ENCODE measurements at regions of chr2 and their contacts with region 1.

Region 1: DNA sequence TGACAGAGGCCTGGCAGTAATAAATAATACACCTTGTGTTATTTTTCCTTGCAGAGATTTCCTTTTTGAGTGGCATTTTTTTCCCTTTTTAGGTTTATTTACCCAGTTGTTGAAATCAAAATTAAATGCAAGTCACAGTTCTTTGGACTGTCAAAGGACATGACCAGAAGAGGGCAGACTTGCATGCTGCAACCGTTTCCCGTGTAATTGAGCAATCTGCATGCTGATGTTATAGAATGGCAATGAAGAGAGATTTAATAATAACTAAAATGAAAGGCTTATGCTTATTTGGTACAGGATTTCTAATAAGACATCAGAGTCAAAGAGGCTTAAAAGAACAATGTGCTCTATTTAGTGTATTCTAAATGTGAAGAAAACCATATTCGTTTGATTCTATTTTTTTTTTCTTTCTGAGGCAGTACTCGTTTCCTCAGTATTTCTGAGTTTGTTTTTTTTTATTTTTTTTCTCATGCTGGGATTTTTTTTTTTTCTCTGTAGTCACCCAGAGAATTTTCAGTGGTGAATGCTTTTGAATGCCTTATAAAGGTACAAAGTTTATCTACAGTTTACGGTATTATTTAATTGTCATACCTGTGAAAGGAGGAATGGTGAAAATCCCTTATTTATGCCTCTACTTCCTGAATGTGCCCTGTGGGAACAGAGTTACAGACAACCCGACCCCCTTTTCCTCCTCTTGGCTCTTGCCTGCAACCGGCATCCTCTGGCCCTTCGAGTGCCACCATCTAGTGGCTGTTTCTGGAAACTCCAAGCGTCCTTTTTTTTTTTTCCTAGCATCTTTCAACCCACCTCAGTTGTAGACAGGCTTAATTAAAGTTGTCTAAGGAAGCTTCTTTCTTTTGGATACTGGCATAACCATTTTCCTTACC is 368.5 kb downstream of the LRRTM1 start:
- DNase-seq: no peak

Region 2: DNA sequence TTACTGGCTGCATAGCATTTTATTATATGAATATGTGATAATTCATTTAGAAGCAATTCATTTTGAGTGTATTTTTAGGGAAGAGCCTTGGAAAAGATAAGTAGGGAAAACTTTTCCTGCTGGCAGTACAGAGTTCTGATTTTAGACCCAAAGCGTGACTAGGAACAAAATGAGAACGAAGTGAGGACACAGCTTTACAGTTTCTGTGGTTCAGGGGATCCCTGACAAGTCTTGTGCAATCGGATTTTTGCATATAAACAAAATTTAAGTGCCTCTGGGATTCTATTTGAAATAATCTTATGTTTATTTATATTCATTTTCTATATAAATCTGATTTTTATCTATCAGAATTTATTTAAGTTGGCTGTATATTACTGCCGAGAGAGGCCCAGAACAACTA is 20.6 kb before region 1 on chr2:
- intact Hi-C with region 1: loop called in 1 of 2 experiments (anchors 1 kb)
- DNase-seq: no peak

Region 3: GRCh38 chr2:81528852-81529480 is 1593.0 kb after region 1 on chr2:
- intact Hi-C with region 1: no loop called
- DNase-seq: no peak

Measured in posterior vena cava (tissue), 2 donors.